Breast epithelium (tissue), 4 donors: ENCODE measurements at regions of chr2 and their contacts with region 1.

Region 1: DNA sequence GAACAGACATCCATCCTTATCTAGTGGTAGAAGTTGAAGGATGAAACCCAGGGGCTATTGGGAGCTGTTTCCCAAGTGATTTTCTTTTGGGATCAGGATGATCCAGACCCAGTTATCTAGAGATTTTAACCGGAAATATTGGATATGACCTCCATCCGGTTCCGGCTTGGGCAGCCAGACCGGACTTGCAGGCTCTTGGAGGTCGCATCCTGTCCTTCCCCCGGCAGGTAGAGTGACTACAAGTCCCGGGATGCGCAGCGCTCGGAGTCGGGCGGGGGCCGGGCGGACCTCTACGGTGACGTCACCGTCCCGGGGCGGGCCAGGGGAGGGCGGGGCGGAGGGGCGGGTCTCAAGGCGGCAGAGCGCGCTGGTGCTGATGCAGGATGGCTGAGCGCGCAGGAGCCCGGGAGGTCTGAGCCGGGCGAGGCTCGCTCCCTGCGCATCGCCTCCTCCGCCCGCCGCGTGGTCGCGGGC is at the start of gene KIF5C:
- DNase-seq: peak; percentile 70 to 78
- H3K4me3 ChIP-seq: peak within 1 kb of the TSS; percentile 24 to 84 (median 58)
- H3K27ac ChIP-seq: no peak within 1 kb of the TSS
- H3K4me1 ChIP-seq: peaks cover 0 to 3% of the 10 kb centered on the region in 2 donors
- H3K27me3 ChIP-seq: peaks cover 0 to 17% of the 10 kb centered on the region in 2 donors
- CTCF ChIP-seq: no peak
- POLR2A ChIP-seq: no peak
- total RNA-seq, gene KIF5C: 2.7 to 13.3 (median 6.2) TPM

Region 2: DNA sequence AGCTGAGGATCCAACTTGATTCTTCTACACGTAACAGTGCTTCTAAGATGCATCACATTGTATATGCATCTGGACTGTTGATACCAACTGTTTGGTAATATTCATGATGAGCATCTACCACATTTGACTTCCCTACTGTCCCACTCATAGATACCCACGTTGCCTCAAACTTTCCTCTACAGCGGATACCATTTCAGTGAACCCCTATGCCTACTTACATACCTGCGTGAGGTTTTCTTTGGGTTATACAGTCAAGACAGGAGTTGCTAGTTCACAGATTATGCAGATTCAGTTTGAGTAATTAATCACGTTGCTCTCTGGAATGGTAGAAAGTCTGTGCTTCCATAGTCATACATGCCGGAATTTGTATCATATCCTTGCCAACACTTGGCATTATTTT is 190.4 kb before region 1 on chr2:
- intact Hi-C with region 1: no loop called
- DNase-seq: no peak
- H3K4me3 ChIP-seq: no peak overlapping the region
- H3K27ac ChIP-seq: no peak overlapping the region
- H3K4me1 ChIP-seq: no peaks in the 10 kb centered on the region
- H3K27me3 ChIP-seq: no peaks in the 10 kb centered on the region
- CTCF ChIP-seq: no peak
- POLR2A ChIP-seq: no peak

Region 3: GRCh38 chr2:148824190-148824589 is 50.7 kb before region 1 on chr2:
- intact Hi-C with region 1: loop called (anchors 5 kb)
- DNase-seq: no peak
- H3K4me3 ChIP-seq: no peak overlapping the region
- H3K27ac ChIP-seq: no peak overlapping the region
- H3K4me1 ChIP-seq: no peaks in the 10 kb centered on the region
- H3K27me3 ChIP-seq: no peaks in the 10 kb centered on the region
- CTCF ChIP-seq: no peak
- POLR2A ChIP-seq: no peak

Region 4: GRCh38 chr2:148909114-148909513 is 34.2 kb after region 1 on chr2:
- intact Hi-C with region 1: no loop called
- DNase-seq: no peak
- H3K4me3 ChIP-seq: no peak overlapping the region
- H3K27ac ChIP-seq: no peak overlapping the region
- H3K4me1 ChIP-seq: no peaks in the 10 kb centered on the region
- H3K27me3 ChIP-seq: no peaks in the 10 kb centered on the region
- CTCF ChIP-seq: no peak
- POLR2A ChIP-seq: no peak